AG04450 (cell line): ENCODE measurements at regions of chr5 and their contacts with region 1.

Region 1: GRCh38 chr5:151164686-151165392 is 7.3 kb upstream of the ANXA6 start:
- DNase-seq: peak; percentile 56
- H3K4me3 ChIP-seq: no peak overlapping the region
- H3K27ac ChIP-seq: no peak overlapping the region
- H3K27me3 ChIP-seq: peaks cover 2% of the 10 kb centered on the region
- CTCF ChIP-seq: peak; percentile 93

Region 2: GRCh38 chr5:150523472-150524350 is 641.1 kb before region 1 on chr5:
- CTCF ChIA-PET with region 1: no interaction called
- POLR2A ChIA-PET with region 1: no interaction called
- DNase-seq: peak; percentile 63
- H3K4me3 ChIP-seq: no peak overlapping the region
- H3K27ac ChIP-seq: no peak overlapping the region
- H3K27me3 ChIP-seq: no peaks in the 10 kb centered on the region
- CTCF ChIP-seq: peak; percentile 74

Region 3: GRCh38 chr5:150801117-150801927 is 363.5 kb before region 1 on chr5:
- CTCF ChIA-PET with region 1: interaction called, 28 read pairs
- POLR2A ChIA-PET with region 1: no interaction called
- DNase-seq: no peak
- H3K4me3 ChIP-seq: peak overlapping the region; percentile 40
- H3K27ac ChIP-seq: no peak overlapping the region
- H3K27me3 ChIP-seq: no peaks in the 10 kb centered on the region
- CTCF ChIP-seq: peak; percentile 64

Region 4: GRCh38 chr5:151150471-151151262 is 14.2 kb before region 1 on chr5:
- CTCF ChIA-PET with region 1: interaction called, 22 read pairs
- POLR2A ChIA-PET with region 1: no interaction called
- DNase-seq: no peak
- H3K4me3 ChIP-seq: no peak overlapping the region
- H3K27ac ChIP-seq: peak overlapping the region; percentile 73
- H3K27me3 ChIP-seq: no peaks in the 10 kb centered on the region
- CTCF ChIP-seq: no peak

Region 5: GRCh38 chr5:151239237-151239861 is 74.5 kb after region 1 on chr5:
- CTCF ChIA-PET with region 1: interaction called, 12 read pairs
- POLR2A ChIA-PET with region 1: no interaction called
- DNase-seq: no peak
- H3K4me3 ChIP-seq: no peak overlapping the region
- H3K27ac ChIP-seq: no peak overlapping the region
- H3K27me3 ChIP-seq: peaks cover 17% of the 10 kb centered on the region
- CTCF ChIP-seq: peak; percentile 77

Region 6: DNA sequence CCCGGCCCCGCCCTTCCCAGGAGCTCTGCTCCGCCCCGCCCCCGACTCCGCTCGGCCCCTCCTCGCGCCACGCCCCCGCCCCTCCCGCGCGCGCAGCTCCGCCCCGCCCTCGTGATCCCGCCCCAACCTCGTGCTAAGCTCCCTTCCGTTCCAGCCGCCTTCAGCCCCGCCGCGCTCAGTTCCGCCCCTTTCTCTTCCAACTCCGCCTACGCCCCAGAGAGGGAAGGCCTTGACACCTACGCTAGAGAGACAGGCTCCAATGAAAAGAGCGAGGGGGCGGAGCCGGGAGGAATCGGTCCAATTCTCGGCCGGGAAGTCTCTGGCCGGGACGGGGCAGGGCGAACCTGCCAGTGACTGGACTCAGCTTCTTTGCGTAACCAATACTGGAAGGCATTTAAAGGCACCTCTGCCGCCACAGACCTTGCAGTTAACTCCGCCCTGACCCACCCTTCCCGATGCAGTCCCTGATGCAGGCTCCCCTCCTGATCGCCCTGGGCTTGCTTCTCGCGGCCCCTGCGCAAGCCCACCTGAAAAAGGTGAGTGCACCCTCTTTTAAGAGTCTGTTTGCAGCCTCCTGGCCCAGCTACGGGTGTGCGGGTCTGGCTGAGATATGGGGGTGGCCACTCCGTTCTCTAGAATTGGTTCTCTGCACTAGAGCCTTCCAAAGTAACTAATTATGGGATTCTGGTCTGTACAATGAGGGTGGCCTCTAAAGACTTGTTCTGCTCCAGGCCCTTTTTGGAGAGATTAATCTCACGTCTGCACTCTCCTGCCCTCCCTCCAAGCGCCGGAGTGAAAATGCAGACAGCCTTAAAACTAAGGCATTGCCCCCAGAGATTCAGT is 88.1 kb after region 1 on chr5 and contains the start of gene GM2A:
- CTCF ChIA-PET with region 1: interaction called, 5 read pairs
- POLR2A ChIA-PET with region 1: interaction called, 12 read pairs
- DNase-seq: peak; percentile 97
- H3K4me3 ChIP-seq: peak within 1 kb of the TSS; percentile 90
- H3K27ac ChIP-seq: no peak within 1 kb of the TSS
- H3K27me3 ChIP-seq: peaks cover under 1% of the 10 kb centered on the region
- CTCF ChIP-seq: no peak
- polyA plus RNA-seq, gene GM2A: 18.4 and 20.9 TPM in 2 replicates